MCF 10A (cell line): ENCODE measurements at regions of chr20 and their contacts with region 1.

Region 1: GRCh38 chr20:36861875-36862801 is 13.8 kb upstream of the TLDC2 start:
- DNase-seq: peak; percentile 98
- H3K4me3 Mint-ChIP-seq: peak overlapping the region; percentile 76
- H3K27ac Mint-ChIP-seq: no peak overlapping the region
- H3K4me1 Mint-ChIP-seq: peaks cover 44% of the 10 kb centered on the region
- H3K27me3 Mint-ChIP-seq: no peaks in the 10 kb centered on the region
- CTCF ChIP-seq: no peak

Region 2: GRCh38 chr20:36613974-36614373 is 248.2 kb before region 1 on chr20:
- CTCF ChIA-PET with region 1: interaction called, 14 read pairs
- POLR2A ChIA-PET with region 1: no interaction called
- intact Hi-C with region 1: no loop called
- DNase-seq: peak; percentile 14
- H3K4me3 Mint-ChIP-seq: no peak overlapping the region
- H3K27ac Mint-ChIP-seq: no peak overlapping the region
- H3K4me1 Mint-ChIP-seq: peaks cover 5% of the 10 kb centered on the region
- H3K27me3 Mint-ChIP-seq: no peaks in the 10 kb centered on the region
- CTCF ChIP-seq: no peak

Region 3: DNA sequence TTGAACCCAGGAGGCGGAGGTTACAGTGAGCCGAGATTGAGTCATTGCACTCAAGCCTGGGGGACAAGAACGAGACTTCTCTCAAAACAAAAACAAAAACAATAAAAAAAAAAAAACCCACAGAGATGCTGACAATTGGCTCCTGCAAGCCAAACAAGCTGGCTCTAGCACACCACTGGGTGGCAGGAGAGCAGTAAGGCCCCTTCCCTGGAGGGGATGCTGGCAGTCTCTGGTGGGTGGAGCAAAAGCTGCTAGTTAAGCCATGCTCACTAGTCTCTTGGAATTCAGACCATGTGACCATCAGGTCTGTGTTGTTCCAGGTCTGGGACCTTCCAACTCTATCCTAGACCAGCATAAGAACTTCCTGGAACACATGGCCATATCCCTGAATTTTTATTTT is 69.7 kb before region 1 on chr20:
- CTCF ChIA-PET with region 1: interaction called, 3 read pairs
- POLR2A ChIA-PET with region 1: interaction called, 3 read pairs
- intact Hi-C with region 1: loop called (anchors 5 kb)
- DNase-seq: peak; percentile 36
- H3K4me3 Mint-ChIP-seq: no peak overlapping the region
- H3K27ac Mint-ChIP-seq: no peak overlapping the region
- H3K4me1 Mint-ChIP-seq: no peaks in the 10 kb centered on the region
- H3K27me3 Mint-ChIP-seq: no peaks in the 10 kb centered on the region
- CTCF ChIP-seq: peak; percentile 20

Region 4: GRCh38 chr20:36835453-36836198 is 26.5 kb before region 1 on chr20:
- CTCF ChIA-PET with region 1: interaction called, 14 read pairs
- POLR2A ChIA-PET with region 1: interaction called, 49 read pairs
- intact Hi-C with region 1: loop called (anchors 1 kb)
- DNase-seq: peak; percentile 94
- H3K4me3 Mint-ChIP-seq: peak overlapping the region; percentile 65
- H3K27ac Mint-ChIP-seq: peak overlapping the region; percentile 81
- H3K4me1 Mint-ChIP-seq: no peaks in the 10 kb centered on the region
- H3K27me3 Mint-ChIP-seq: no peaks in the 10 kb centered on the region
- CTCF ChIP-seq: no peak

Region 5: GRCh38 chr20:36872852-36873251 is 10.7 kb after region 1 on chr20:
- CTCF ChIA-PET with region 1: interaction called, 12 read pairs
- POLR2A ChIA-PET with region 1: interaction called, 6 read pairs
- intact Hi-C with region 1: no loop called
- DNase-seq: no peak
- H3K4me3 Mint-ChIP-seq: no peak overlapping the region
- H3K27ac Mint-ChIP-seq: no peak overlapping the region
- H3K4me1 Mint-ChIP-seq: no peaks in the 10 kb centered on the region
- H3K27me3 Mint-ChIP-seq: no peaks in the 10 kb centered on the region
- CTCF ChIP-seq: no peak

Region 6: GRCh38 chr20:36908603-36909002 is 46.5 kb after region 1 on chr20:
- CTCF ChIA-PET with region 1: no interaction called
- POLR2A ChIA-PET with region 1: no interaction called
- intact Hi-C with region 1: no loop called
- DNase-seq: no peak
- H3K4me3 Mint-ChIP-seq: no peak overlapping the region
- H3K27ac Mint-ChIP-seq: no peak overlapping the region
- H3K4me1 Mint-ChIP-seq: no peaks in the 10 kb centered on the region
- H3K27me3 Mint-ChIP-seq: no peaks in the 10 kb centered on the region
- CTCF ChIP-seq: no peak

Region 7: DNA sequence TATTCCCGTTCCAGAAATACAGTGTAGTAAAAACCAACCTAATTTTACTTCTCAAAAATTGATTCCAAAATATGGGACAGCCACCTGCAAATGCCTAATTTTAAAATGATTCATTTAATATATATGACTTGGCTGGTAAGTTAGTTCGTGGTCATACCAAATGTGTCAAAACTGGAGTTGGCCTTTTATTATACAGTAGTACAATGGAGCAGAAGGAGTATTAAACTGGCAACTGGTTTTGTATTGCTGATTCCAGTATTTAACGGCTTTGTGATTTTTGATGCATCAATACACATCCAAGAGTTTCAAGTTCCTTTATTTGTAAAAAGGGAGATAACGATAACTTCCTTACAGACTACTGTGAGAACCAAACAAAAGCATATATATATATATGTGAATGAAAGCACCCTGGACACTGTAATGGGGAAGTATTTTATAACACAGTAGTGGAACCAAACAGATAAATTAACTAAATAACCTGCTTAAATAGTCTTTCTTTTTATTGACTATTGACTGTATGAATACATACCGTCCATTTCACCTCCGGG is 64.6 kb after region 1 on chr20:
- CTCF ChIA-PET with region 1: no interaction called
- POLR2A ChIA-PET with region 1: no interaction called
- intact Hi-C with region 1: no loop called
- DNase-seq: no peak
- H3K4me3 Mint-ChIP-seq: no peak overlapping the region
- H3K27ac Mint-ChIP-seq: no peak overlapping the region
- H3K4me1 Mint-ChIP-seq: no peaks in the 10 kb centered on the region
- H3K27me3 Mint-ChIP-seq: no peaks in the 10 kb centered on the region
- CTCF ChIP-seq: no peak